Mammary epithelial cell (primary cell): ENCODE measurements at regions of chr10 and their contacts with region 1.

Region 1: DNA sequence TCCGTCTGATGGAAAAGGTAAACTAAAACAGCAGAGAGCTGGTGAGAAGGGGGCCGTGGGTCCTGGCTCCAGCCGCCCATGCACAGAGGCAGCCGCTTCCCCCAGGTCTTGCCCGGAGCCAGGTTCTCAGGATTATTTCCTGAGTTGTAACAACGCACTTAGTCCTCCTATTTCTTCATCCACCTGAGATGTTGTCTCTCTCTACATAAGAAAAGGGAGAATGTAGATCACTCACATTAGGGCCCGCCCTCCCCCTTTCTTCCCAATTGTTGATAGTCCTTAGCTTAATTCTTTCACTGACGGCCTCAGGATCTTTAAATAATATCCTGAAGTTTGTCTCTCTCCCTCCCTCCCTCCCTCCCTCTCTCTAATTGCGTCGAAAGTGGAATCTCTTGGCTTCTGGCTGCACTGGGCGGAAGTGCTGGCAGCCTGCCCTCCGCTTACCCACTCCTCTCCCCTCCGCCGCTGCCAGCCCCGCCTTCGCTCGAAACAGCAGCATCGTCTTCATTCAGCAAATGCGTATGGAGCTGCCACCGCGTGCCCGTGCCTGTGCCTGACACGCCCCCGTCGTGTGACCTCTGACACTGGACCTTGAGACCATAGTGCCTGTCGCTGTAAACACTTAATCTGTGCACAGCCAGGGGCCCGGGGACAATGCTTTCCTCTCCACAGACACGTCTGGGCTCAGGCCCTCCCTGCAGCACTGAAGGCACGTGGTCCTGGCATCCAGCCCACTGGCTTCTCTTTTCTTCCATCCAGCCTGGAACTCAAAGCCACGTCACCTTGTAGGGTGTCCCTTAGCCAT is 174.5 kb upstream of the PPP2R2D start:
- DNase-seq: no peak
- H3K4me3 ChIP-seq: no peak overlapping the region
- H3K27ac ChIP-seq: no peak overlapping the region
- H3K4me1 ChIP-seq: no peaks in the 10 kb centered on the region
- H3K27me3 ChIP-seq: no peaks in the 10 kb centered on the region
- CTCF ChIP-seq: no peak

Region 2: GRCh38 chr10:131663351-131663750 is 62.9 kb before region 1 on chr10:
- CTCF ChIA-PET with region 1: no interaction called
- dilution Hi-C with region 1: loop called (anchors 10 kb)
- in situ Hi-C with region 1: no loop called
- intact Hi-C with region 1: no loop called
- DNase-seq: no peak
- H3K4me3 ChIP-seq: no peak overlapping the region
- H3K27ac ChIP-seq: no peak overlapping the region
- H3K4me1 ChIP-seq: no peaks in the 10 kb centered on the region
- H3K27me3 ChIP-seq: no peaks in the 10 kb centered on the region
- CTCF ChIP-seq: no peak